HepG2 (cell line): ENCODE measurements at regions of chr11 and their contacts with region 1.

Region 1: DNA sequence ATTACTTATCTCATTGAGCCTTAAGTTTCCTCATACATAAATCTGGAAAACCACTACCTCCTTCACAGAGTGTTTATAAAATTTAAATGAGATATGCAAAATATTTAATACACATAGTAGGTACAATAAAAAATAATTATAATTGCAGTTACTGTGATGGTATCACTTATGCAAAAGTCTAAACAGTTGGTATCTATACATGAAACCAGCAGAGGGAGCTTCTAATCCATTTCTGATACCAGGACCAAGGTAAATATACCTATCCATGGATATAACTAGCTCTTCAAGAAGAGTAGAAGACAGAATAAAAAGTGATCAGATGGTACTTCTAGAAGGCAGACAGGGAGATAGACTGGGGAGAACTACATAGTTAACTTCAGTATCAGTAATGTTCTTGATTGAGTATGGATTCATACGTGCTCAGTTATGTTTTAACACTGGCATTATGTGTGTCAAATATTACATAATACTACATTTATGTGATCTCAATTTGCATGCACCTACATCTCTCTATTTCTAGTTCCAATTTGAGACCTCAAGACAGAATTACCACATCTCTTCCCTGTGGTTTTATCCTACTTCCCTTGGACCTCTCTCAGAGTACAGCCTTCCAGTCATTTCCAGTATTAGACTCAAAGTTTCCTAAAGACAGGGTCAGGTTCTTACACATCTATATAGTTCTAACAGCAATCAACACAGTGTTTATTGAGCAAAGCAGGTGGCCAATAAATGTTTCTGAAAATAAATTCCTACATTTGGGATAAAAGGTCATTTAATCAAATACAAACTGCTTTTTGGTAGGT is 13.7 kb upstream of the TSG101 start:
- DNase-seq: peak; percentile 42
- ATAC-seq: peak; percentile 64
- H3K4me3 ChIP-seq: no peak overlapping the region
- H3K27ac ChIP-seq: no peak overlapping the region
- H3K4me1 ChIP-seq: no peaks in the 10 kb centered on the region
- H3K27me3 ChIP-seq: no peaks in the 10 kb centered on the region
- CTCF ChIP-seq: peak; percentile 52
- EP300 ChIP-seq: no peak
- POLR2A ChIP-seq: no peak
- RAD21 ChIP-seq: 0 out of 2 replicates have a peak, but pooled peaks have one; percentile 14

Region 2: GRCh38 chr11:18588297-18589252 is 48.2 kb after region 1 on chr11 and contains the start of gene UEVLD:
- CTCF ChIA-PET with region 1: no interaction called
- POLR2A ChIA-PET with region 1: no interaction called
- in situ Hi-C with region 1: no loop called
- intact Hi-C with region 1: loop called (anchors 2 kb)
- DNase-seq: peak; percentile 81
- ATAC-seq: peak; percentile 93
- H3K4me3 ChIP-seq: peak within 1 kb of the TSS; percentile 82 to 89 (median 83)
- H3K27ac ChIP-seq: peak within 1 kb of the TSS; percentile 70
- H3K4me1 ChIP-seq: peaks cover 48% of the 10 kb centered on the region
- H3K27me3 ChIP-seq: no peaks in the 10 kb centered on the region
- CTCF ChIP-seq: peak; percentile 13
- EP300 ChIP-seq: 0 out of 4 replicates have a peak, but pooled peaks of 1 of the 2 experiments have one; percentile 34
- POLR2A ChIP-seq: peak; percentile 81 to 92
- RAD21 ChIP-seq: no peak
- total RNA-seq, gene UEVLD: 13.7 and 21.1 TPM in 2 replicates

Region 3: DNA sequence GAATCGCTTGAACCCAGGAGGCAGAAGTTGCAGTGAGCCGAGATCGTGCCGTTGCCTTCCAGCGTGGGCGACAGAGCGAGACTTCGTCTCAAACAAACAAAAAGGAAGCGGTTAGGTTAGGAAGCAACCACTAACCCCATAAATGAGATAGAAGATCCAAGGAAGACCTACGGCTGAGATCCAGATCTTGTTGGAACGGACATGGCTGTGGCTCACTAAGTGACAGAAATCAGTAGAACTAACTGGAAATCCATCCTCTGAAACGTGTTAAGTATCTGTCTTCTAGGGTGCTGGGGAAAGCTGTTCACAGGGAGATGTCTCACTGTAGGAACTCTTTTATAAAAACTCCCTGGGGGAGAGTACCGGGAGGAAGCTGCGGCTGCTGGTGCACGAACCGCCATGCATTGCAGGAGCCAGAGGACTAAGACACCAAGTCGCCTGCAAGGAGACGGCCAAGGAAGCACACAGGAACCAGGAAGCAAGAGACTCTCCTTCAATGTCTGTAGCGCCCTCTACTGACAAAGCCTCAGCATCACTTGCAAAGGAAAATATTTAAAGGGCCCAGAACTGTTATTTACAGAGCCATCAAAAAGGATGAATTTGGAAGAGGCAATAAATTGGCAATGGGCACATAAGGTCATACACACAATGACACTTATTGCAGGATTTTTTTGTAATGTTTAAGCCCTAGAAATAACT is 110.6 kb after region 1 on chr11:
- CTCF ChIA-PET with region 1: interaction called, 10 read pairs
- POLR2A ChIA-PET with region 1: no interaction called
- in situ Hi-C with region 1: no loop called
- intact Hi-C with region 1: loop called (anchors 2 kb)
- DNase-seq: peak; percentile 49
- ATAC-seq: peak; percentile 53; the same call in 2 of the 3 replicates
- H3K4me3 ChIP-seq: no peak overlapping the region
- H3K27ac ChIP-seq: no peak overlapping the region
- H3K4me1 ChIP-seq: peaks cover 8% of the 10 kb centered on the region; the same call in 1 of the 2 replicates
- H3K27me3 ChIP-seq: no peaks in the 10 kb centered on the region
- CTCF ChIP-seq: peak; percentile 76
- EP300 ChIP-seq: no peak
- POLR2A ChIP-seq: no peak
- RAD21 ChIP-seq: no peak

Region 4: DNA sequence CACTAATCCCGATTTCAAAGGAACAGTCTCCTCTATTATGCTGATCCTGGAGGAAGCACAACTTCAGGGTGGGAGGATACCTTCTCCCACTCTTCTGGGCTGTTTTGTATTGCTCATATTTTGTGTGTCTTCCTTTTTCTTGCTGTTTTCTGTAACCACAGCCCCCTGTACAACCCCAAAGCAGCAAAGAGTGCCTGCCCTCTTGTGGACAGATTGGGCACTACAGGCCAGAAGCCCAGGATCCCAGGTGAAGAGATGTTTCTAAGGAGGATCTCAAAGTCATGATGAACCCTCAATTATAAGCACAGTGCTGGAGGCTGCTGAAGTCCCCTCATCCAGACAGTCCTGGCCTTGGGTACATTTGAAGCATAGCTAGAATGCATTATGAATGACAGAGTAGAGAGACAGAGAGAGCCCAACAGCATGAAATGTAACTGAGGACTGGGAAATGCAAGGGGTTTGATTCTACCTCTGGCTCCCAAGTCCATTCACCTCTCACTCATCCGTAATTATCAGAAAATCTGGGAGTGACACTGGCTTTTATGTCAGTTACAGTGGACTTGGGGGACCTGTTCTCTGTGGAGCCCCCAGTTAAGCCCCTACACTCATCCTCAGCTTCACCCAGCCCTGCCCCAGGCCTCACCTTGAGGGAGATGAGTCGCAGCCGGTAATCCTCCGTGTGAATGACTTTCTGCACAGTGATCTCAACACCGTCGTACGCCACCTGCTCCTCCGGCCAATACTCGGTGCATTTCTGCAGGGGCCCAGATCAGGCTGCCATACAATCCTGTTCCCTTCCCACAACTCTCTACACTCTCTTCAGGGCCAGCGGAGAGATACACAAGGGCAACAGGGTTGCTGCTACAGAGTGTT is 191.8 kb after region 1 on chr11:
- CTCF ChIA-PET with region 1: interaction called, 9 read pairs
- POLR2A ChIA-PET with region 1: no interaction called
- in situ Hi-C with region 1: loop called (anchors 10 kb)
- intact Hi-C with region 1: loop called (anchors 1 kb)
- DNase-seq: no peak
- ATAC-seq: peak; percentile 64
- H3K4me3 ChIP-seq: no peak overlapping the region
- H3K27ac ChIP-seq: no peak overlapping the region
- H3K4me1 ChIP-seq: no peaks in the 10 kb centered on the region
- H3K27me3 ChIP-seq: peaks cover 6 to 48% of the 10 kb centered on the region in 2 experiments; a peak in 3 of 5 replicates
- CTCF ChIP-seq: peak; percentile 83
- EP300 ChIP-seq: no peak
- POLR2A ChIP-seq: no peak
- RAD21 ChIP-seq: no peak

Region 5: DNA sequence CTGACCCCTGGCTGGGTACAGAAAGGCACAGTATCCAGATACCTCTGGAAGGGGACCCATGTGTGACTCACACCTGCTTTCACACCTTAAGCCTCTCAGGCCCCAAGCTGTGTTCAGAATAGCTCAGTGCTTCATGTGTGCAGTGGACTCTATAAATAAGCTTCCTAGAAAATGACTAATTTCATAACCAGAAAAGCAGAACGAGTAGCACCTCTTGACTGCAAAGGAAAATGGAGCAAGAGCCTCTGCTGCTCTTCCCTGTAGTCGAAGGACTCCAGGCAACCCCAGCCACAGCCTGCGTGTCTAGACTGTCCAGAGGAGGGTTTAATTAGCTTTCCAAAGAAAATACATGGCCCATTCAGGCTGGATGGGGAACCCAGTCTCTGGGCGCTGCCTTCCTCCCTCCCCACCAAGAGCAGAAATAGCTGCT is 228.1 kb after region 1 on chr11:
- CTCF ChIA-PET with region 1: interaction called, 5 read pairs
- POLR2A ChIA-PET with region 1: no interaction called
- in situ Hi-C with region 1: no loop called
- intact Hi-C with region 1: loop called (anchors 1 kb)
- DNase-seq: no peak
- ATAC-seq: no peak
- H3K4me3 ChIP-seq: no peak overlapping the region
- H3K27ac ChIP-seq: no peak overlapping the region
- H3K4me1 ChIP-seq: peaks cover 15% of the 10 kb centered on the region
- H3K27me3 ChIP-seq: peaks cover 5 to 23% of the 10 kb centered on the region in 2 experiments; a peak in 3 of 5 replicates
- CTCF ChIP-seq: no peak
- EP300 ChIP-seq: no peak
- POLR2A ChIP-seq: no peak
- RAD21 ChIP-seq: no peak